ENCODE measurements at regions of chr12 and their contacts with region 1.

Region 1: GRCh38 chr12:89389755-89390661 is 37.7 kb upstream of the DUSP6 start:
- DNase-seq: peak; percentile 54
- ATAC-seq: peak; percentile 24
- H3K4me3 ChIP-seq: no peak overlapping the region
- H3K27ac ChIP-seq: no peak overlapping the region
- H3K4me1 ChIP-seq: peaks cover 12% of the 10 kb centered on the region
- H3K27me3 ChIP-seq: no peaks in the 10 kb centered on the region
- CTCF ChIP-seq: no peak
- POLR2A ChIP-seq: no peak
- RAD21 ChIP-seq: no peak

Region 2: GRCh38 chr12:89244536-89244935 is 145.5 kb before region 1 on chr12:
- CTCF ChIA-PET with region 1: no interaction called
- POLR2A ChIA-PET with region 1: no interaction called
- dilution Hi-C with region 1: no loop called
- in situ Hi-C with region 1: no loop called
- intact Hi-C with region 1: no loop called
- DNase-seq: peak; percentile 64
- ATAC-seq: peak; percentile 68
- H3K4me3 ChIP-seq: no peak overlapping the region; the same call in 1 of the 2 replicates
- H3K27ac ChIP-seq: peak overlapping the region; percentile 29
- H3K4me1 ChIP-seq: peaks cover 11% of the 10 kb centered on the region
- H3K27me3 ChIP-seq: no peaks in the 10 kb centered on the region
- CTCF ChIP-seq: no peak
- POLR2A ChIP-seq: no peak
- RAD21 ChIP-seq: no peak

Region 3: GRCh38 chr12:89411846-89412245 is 21.8 kb after region 1 on chr12:
- CTCF ChIA-PET with region 1: no interaction called
- POLR2A ChIA-PET with region 1: interaction called, 13 read pairs
- dilution Hi-C with region 1: no loop called
- in situ Hi-C with region 1: no loop called
- intact Hi-C with region 1: no loop called
- DNase-seq: no peak
- ATAC-seq: no peak
- H3K4me3 ChIP-seq: no peak overlapping the region
- H3K27ac ChIP-seq: no peak overlapping the region
- H3K4me1 ChIP-seq: peaks cover 9% of the 10 kb centered on the region
- H3K27me3 ChIP-seq: no peaks in the 10 kb centered on the region
- CTCF ChIP-seq: no peak
- POLR2A ChIP-seq: no peak
- RAD21 ChIP-seq: no peak

Region 4: GRCh38 chr12:89992668-89993451 is 602.9 kb after region 1 on chr12:
- CTCF ChIA-PET with region 1: interaction called, 11 read pairs
- POLR2A ChIA-PET with region 1: no interaction called
- dilution Hi-C with region 1: no loop called
- in situ Hi-C with region 1: no loop called
- intact Hi-C with region 1: no loop called
- DNase-seq: no peak
- ATAC-seq: no peak
- H3K4me3 ChIP-seq: no peak overlapping the region
- H3K27ac ChIP-seq: no peak overlapping the region
- H3K4me1 ChIP-seq: peaks cover 2% of the 10 kb centered on the region
- H3K27me3 ChIP-seq: no peaks in the 10 kb centered on the region
- CTCF ChIP-seq: no peak
- POLR2A ChIP-seq: no peak
- RAD21 ChIP-seq: no peak